Activated naive CD4-positive, alpha-beta T cell treated with anti-CD3 and anti-CD28 coated beads, Interleukin-2, amount 10 ng/mL, durations not matched to agents 7 days and 5 days (primary cell): ENCODE measurements at regions of chr5 and their contacts with region 1.

Region 1: GRCh38 chr5:76074487-76075065 is 8.6 kb upstream of the SV2C start:
- DNase-seq: peak; percentile 45
- H3K4me3 Mint-ChIP-seq: no peak overlapping the region
- H3K27ac Mint-ChIP-seq: no peak overlapping the region
- H3K4me1 Mint-ChIP-seq: no peaks in the 10 kb centered on the region
- H3K27me3 Mint-ChIP-seq: peaks cover 58% of the 10 kb centered on the region

Region 2: DNA sequence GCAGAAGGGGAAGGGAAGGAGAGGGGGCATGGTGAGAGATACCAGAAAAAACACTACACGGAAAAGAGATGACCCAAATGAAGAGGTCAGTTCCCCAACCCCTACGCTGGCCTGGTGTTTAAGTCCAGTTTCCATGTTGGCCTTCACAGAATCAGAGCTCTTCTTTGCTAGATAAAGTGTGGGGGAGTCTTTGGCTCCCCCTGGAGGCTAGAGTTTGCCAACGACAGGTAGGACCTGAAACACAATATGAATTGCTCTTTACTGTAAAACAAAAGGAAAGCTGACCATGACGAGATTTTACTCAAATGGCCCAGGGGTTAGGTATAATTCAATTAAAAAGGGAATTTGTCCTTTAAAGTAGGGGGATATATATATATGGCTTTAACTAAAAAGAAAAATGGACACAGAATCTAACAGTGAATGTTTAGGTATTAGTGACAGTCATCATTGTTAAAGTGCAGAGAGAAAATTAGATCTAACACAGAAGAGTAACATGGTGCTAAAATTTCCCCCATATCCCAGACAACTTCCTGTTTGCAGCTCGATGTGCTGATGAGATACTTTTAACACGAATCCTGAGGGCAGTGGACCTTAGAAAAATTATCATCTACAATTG is 100.6 kb after region 1 on chr5:
- CTCF ChIA-PET with region 1: interaction called, 13 read pairs
- DNase-seq: peak; percentile 68
- H3K4me3 Mint-ChIP-seq: no peak overlapping the region
- H3K27ac Mint-ChIP-seq: peak overlapping the region; percentile 79
- H3K4me1 Mint-ChIP-seq: peaks cover 21% of the 10 kb centered on the region
- H3K27me3 Mint-ChIP-seq: no peaks in the 10 kb centered on the region

Region 3: DNA sequence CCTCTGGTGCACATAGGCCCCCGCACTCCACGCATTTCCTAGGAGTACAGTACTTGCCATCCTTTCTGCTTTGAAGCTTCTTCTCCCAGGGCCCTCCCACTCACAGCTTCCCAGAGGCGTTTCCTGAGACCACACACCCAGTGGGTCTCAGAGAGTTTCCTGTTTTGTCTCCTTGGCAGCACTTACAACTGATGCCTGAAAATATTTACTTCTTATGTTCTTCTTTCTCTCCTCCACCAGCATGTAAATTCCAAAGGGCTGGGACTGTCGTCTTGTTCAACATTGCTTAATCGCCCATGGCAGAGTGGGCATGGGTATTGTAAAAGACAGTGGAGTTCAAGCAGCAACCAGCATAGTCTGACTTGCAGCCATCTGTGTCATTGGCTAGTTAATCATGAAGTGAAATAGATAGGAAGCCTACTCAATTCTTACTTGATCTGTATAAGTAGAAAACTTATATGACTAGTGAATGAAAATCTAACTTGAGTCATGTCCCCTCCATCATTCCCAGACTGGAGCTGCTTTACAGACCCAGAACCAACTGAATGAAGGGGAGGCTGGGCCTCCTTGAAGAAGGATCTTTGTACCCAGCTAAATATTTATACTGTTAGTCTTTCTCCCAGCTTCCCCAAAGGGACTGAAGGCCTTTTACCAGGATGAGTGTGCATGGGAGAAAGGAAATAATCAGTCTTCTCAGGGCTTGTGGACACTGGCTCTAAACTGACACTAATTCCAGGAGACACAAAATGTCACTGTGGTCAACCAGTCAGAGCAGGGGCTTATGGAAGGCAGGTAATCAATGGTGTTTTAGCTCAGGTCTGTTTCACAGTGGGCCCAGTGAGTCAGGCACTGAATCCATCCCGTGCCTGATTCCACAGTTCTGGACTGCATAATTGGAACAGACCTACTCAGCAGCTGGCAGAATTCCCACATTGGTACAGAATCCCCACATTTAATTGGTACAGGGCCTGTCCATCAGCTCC is 125.1 kb after region 1 on chr5:
- CTCF ChIA-PET with region 1: no interaction called
- DNase-seq: no peak
- H3K4me3 Mint-ChIP-seq: no peak overlapping the region
- H3K27ac Mint-ChIP-seq: no peak overlapping the region
- H3K4me1 Mint-ChIP-seq: peaks cover 5% of the 10 kb centered on the region
- H3K27me3 Mint-ChIP-seq: peaks cover 22% of the 10 kb centered on the region

Region 4: GRCh38 chr5:76256116-76256889 is 181.7 kb after region 1 on chr5:
- CTCF ChIA-PET with region 1: interaction called, 13 read pairs
- DNase-seq: peak; percentile 77
- H3K4me3 Mint-ChIP-seq: no peak overlapping the region
- H3K27ac Mint-ChIP-seq: no peak overlapping the region
- H3K4me1 Mint-ChIP-seq: peaks cover 12% of the 10 kb centered on the region
- H3K27me3 Mint-ChIP-seq: peaks cover 30% of the 10 kb centered on the region

Region 5: GRCh38 chr5:76290321-76290757 is 215.8 kb after region 1 on chr5:
- CTCF ChIA-PET with region 1: no interaction called
- DNase-seq: no peak
- H3K4me3 Mint-ChIP-seq: no peak overlapping the region
- H3K27ac Mint-ChIP-seq: no peak overlapping the region
- H3K4me1 Mint-ChIP-seq: peaks cover 3% of the 10 kb centered on the region
- H3K27me3 Mint-ChIP-seq: peaks cover 19% of the 10 kb centered on the region